ENCODE measurements at regions of chr17 and their contacts with region 1.

Region 1: GRCh38 chr17:82964851-82965341 is 114.5 kb upstream of the METRNL start:
- DNase-seq: no peak
- H3K4me3 ChIP-seq: no peak overlapping the region
- H3K27ac ChIP-seq: no peak overlapping the region
- H3K4me1 ChIP-seq: peaks cover 0 to 10% (median 6%) of the 10 kb centered on the region in 4 donors
- H3K27me3 ChIP-seq: no peaks in the 10 kb centered on the region
- CTCF ChIP-seq: no peak
- EP300 ChIP-seq: no peak
- POLR2A ChIP-seq: no peak

Region 2: DNA sequence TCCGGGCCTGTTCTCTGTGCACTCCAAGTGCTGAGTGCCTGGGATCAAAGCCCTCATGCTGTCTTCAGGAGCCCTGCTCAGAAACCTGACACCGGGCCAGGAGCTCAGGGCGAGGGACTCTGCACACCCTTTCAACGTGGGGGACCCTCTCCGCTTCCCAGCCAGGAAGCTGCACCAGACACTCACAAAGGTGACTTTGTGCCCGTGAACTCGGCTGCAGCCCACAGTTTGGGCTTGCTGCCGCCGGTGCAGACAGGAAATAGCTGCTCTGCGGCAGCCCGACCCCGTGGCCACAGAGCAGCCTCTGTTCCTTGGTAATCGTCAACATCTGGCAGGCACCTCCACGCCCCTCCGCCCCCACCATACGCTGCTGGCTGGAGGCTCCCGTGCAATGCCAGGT is 21.1 kb after region 1 on chr17:
- in situ Hi-C with region 1: no loop called
- intact Hi-C with region 1: loop called (anchors 1 kb)
- DNase-seq: peak; percentile 47
- H3K4me3 ChIP-seq: no peak overlapping the region
- H3K27ac ChIP-seq: peak overlapping the region in 1 of 4 donors; percentile 31
- H3K4me1 ChIP-seq: no peaks in the 10 kb centered on the region
- H3K27me3 ChIP-seq: no peaks in the 10 kb centered on the region
- CTCF ChIP-seq: no peak
- EP300 ChIP-seq: no peak
- POLR2A ChIP-seq: no peak